ENCODE measurements at regions of chr17 and their contacts with region 1.

Region 1: DNA sequence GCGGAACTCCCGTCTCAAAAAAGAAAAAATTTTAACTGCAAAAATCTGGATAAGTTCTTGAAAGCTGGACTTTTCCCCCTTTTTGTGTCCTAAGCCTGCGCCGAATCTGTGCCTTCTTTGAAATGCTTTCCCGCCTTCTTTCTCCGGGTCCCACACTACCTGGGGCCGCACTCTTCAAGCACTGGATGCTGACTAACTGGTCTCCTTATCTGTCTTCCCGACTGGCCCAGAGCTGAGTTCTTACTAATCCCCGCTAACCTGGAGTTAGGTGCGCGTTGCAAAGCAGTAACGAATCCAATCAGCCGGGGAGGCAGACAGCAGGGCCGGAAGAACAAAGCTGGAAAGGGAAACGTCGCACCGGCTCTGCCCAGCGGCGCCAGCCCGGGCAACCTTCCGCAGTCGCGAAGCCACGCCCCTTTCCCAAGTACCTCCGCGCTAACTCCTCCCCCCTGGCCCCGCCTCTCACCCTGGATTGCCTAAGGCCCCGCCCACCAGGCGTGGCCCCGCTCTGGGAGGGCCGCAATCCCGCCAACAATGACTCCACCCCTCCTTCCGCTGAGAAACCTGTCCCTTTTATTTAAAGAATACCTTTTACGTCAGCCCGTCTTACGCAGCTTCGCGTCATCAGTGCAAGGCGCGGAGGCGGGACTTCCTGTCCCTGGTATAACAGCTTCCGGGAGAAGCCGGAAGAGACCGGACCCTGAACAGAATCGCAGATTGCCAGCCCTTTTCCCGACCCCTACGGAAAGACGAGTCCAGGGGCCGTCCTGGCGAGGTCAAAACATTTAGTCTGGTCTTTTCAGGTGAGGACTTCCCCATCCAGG is at the start of gene TMUB2:
- DNase-seq: peak; percentile 99
- ATAC-seq: peak; percentile 95 to 99 (median 97)
- H3K4me3 ChIP-seq: peak within 1 kb of the TSS; percentile 78 to 95 (median 88)
- H3K27ac ChIP-seq: peak within 1 kb of the TSS; percentile 87 to 99 (median 96)
- H3K4me1 ChIP-seq: peaks cover 11 to 42% (median 27%) of the 10 kb centered on the region in 9 donors
- H3K27me3 ChIP-seq: no peaks in the 10 kb centered on the region
- CTCF ChIP-seq: no peak
- total RNA-seq, gene TMUB2: 16.3 to 28.3 (median 19.6) TPM

Region 2: GRCh38 chr17:44199553-44200477 is 13.3 kb after region 1 on chr17 and contains the start of gene ATXN7L3:
- intact Hi-C with region 1: loop called in 1 of 10 experiments (anchors 1 kb)
- DNase-seq: peak; percentile 99
- ATAC-seq: peak; percentile 93 to 96 (median 96)
- H3K4me3 ChIP-seq: peak within 1 kb of the TSS; percentile 92 to 98 (median 94)
- H3K27ac ChIP-seq: peak within 1 kb of the TSS; percentile 97 to 100 (median 99)
- H3K4me1 ChIP-seq: peaks cover 0 to 53% (median 23%) of the 10 kb centered on the region in 9 donors
- H3K27me3 ChIP-seq: no peaks in the 10 kb centered on the region
- CTCF ChIP-seq: no peak
- total RNA-seq, gene ATXN7L3: 23.7 to 40.6 (median 32.4) TPM

Region 3: DNA sequence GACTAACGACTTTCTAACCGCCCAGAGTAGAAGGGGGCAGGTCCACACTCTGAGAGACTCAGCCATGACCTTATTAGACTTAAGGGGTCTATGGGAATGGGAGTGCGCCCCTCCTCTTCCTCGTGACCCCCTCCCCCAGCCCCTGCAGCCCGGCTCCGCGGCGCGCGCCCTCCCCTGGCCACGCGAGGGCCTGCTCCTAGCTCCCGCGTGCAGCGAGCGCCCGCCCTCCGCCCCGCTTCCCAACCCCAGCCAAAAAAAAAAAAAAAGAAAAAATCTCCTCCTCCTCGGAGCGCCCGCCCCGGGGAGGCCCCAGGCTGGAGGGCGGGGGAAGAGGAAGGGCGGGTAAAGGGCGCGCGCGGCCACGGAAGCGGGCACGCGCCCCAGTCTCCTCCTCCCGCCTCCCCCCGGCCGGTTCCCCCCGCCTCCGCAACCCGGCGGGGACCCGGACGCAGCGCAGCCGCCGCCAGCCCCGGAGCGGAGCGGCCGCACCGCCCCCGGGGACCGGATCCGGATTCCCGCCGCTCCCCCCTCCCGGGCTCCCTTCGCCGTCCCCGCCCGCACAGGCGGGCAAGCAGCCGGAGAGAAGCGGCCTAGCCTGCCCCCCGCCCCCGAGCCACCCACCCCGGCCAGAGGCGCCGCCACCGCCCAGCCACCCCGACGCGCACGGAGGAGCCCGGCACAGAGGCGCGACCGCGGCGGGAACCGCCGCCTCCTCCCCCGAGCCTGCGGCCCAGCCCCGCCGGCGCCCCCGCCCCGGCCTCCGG is 32.0 kb after region 1 on chr17:
- intact Hi-C with region 1: loop called in 1 of 10 experiments (anchors 2 kb)
- DNase-seq: peak; percentile 89 to 92
- ATAC-seq: peak; percentile 71 to 84 (median 76)
- H3K4me3 ChIP-seq: peak overlapping the region; percentile 64 to 98 (median 92)
- H3K27ac ChIP-seq: peak overlapping the region; percentile 98 to 100 (median 100)
- H3K4me1 ChIP-seq: peaks cover 7 to 50% (median 38%) of the 10 kb centered on the region in 9 donors
- H3K27me3 ChIP-seq: no peaks in the 10 kb centered on the region
- CTCF ChIP-seq: peak; percentile 57 to 86 (median 70)

Region 4: GRCh38 chr17:44911133-44912001 is 724.8 kb after region 1 on chr17:
- intact Hi-C with region 1: no loop called
- DNase-seq: peak; percentile 63 to 64
- ATAC-seq: peak; percentile 57 to 85 (median 80)
- H3K4me3 ChIP-seq: peak overlapping the region in 9 of 10 donors; percentile 14 to 52 (median 46)
- H3K27ac ChIP-seq: peak overlapping the region in 8 of 10 donors; percentile 28 to 73 (median 44)
- H3K4me1 ChIP-seq: peaks cover 0 to 32% (median 13%) of the 10 kb centered on the region in 9 donors
- H3K27me3 ChIP-seq: peaks cover 0 to 42% (median 12%) of the 10 kb centered on the region in 7 donors
- CTCF ChIP-seq: peak; percentile 23 to 69 (median 56)

Measured in heart right ventricle (tissue), 16 donors.